Breast epithelium (tissue), 4 donors: ENCODE measurements at regions of chr2 and their contacts with region 1.

Region 1: GRCh38 chr2:108448678-108449493 is at the start of gene GCC2:
- DNase-seq: peak; percentile 93 to 96
- H3K4me3 ChIP-seq: peak within 1 kb of the TSS; percentile 74 to 93 (median 79)
- H3K27ac ChIP-seq: peak within 1 kb of the TSS; percentile 94 to 98
- H3K4me1 ChIP-seq: peaks cover 0 to 3% of the 10 kb centered on the region in 2 donors
- H3K27me3 ChIP-seq: no peaks in the 10 kb centered on the region
- CTCF ChIP-seq: no peak
- POLR2A ChIP-seq: peak; percentile 93
- total RNA-seq, gene GCC2: 26.4 to 97.6 (median 63.3) TPM

Region 2: DNA sequence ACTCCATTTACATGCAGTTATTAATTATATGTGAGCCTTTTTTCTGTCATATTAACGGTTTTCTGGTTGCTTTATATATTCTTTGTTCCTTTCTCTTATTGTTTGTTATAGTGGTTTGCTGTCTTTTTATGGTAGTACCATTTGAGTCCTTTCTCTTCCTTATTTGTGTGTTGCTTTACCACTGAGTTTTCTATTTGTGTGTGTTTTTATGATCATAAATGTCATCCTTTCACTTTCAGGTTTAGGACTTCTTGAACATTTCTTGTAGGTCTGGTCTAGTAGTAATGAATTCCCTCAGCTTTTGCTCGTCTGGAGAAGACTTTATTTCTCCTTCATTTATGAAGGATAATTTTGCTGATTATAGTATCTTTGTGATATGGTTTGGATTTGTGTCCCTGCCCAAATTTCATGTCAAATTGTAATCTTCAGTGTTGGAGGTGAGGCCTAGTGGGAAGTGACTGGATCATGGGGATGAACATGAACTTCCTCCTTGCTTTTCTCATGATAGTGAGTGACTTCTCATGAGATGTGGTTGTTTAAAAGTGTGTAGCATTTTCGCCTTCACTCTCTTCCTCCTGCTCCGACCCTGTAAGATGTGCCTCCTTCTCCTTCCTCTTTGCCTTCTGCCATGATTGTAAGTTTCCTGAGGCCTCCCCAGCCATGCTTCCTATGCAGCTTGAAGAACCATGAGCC is 11.6 kb after region 1 on chr2:
- intact Hi-C with region 1: no loop called
- DNase-seq: no peak
- H3K4me3 ChIP-seq: no peak overlapping the region
- H3K27ac ChIP-seq: no peak overlapping the region
- H3K4me1 ChIP-seq: no peaks in the 10 kb centered on the region
- H3K27me3 ChIP-seq: no peaks in the 10 kb centered on the region
- CTCF ChIP-seq: no peak
- POLR2A ChIP-seq: no peak

Region 3: GRCh38 chr2:108533832-108534583 is 85.1 kb after region 1 on chr2 and contains the start of gene LIMS1:
- intact Hi-C with region 1: loop called (anchors 1 kb)
- DNase-seq: peak; percentile 87 to 92
- H3K4me3 ChIP-seq: peak within 1 kb of the TSS; percentile 75 to 86 (median 81)
- H3K27ac ChIP-seq: peak within 1 kb of the TSS; percentile 93 to 97
- H3K4me1 ChIP-seq: peaks cover 0 to 3% of the 10 kb centered on the region in 2 donors
- H3K27me3 ChIP-seq: no peaks in the 10 kb centered on the region
- CTCF ChIP-seq: no peak
- POLR2A ChIP-seq: peak; percentile 71
- total RNA-seq, gene LIMS1: 66.5 to 123 (median 93.1) TPM